ENCODE measurements at regions of chr11 and their contacts with region 1.

Region 1: GRCh38 chr11:35066783-35067423 is 72.1 kb upstream of the CD44 start:
- DNase-seq: no peak
- ATAC-seq: no peak

Region 2: GRCh38 chr11:34840736-34841386 is 226.0 kb before region 1 on chr11:
- intact Hi-C with region 1: no loop called
- DNase-seq: no peak
- ATAC-seq: no peak

Region 3: GRCh38 chr11:35006389-35007128 is 60.3 kb before region 1 on chr11:
- intact Hi-C with region 1: loop called (anchors 10 kb)
- DNase-seq: no peak
- ATAC-seq: no peak

Region 4: DNA sequence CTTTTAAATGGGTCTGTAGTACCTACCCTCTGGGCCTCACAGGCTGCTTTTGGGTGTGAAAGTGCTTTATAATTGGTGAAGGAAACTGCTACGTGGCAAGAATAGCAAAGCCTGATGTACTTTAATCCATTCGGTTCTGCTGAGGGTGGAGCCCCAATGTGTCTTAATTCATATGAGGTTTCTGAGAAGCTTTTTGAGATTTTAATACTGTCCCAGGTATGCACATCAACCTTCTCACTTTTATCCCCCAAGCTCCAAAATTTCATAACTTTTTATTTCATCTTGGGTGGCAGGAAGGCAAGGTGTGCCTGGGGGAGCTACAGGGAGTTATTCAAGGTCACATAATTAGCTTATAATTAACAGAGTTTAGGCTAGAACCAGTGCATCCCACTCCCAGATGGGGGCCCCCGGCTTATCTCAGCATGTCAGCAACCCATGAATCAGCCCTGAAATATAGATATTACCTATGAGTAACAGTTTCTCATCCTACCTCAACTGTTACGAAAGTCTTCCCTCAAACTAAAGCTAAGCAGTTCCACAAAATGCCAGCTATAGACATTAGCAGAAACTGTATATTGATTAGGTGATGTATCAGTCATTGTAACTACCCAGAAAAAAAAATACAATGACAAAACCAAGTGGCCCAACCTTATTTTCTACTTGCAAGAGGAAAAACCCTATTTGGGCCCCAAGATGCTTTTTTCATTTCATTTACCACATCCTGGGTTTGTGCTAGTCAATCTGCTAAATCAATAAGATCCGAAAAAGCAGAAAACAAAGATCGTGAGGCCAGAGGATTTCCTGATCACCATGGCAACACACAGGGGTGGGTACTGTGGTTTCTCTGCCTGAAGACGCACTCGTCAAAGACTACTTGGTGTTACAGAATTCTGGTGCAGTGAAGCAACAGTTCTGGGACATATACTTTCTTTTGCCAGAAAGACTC is 98.8 kb after region 1 on chr11:
- intact Hi-C with region 1: no loop called
- DNase-seq: no peak
- ATAC-seq: no peak

Region 5: DNA sequence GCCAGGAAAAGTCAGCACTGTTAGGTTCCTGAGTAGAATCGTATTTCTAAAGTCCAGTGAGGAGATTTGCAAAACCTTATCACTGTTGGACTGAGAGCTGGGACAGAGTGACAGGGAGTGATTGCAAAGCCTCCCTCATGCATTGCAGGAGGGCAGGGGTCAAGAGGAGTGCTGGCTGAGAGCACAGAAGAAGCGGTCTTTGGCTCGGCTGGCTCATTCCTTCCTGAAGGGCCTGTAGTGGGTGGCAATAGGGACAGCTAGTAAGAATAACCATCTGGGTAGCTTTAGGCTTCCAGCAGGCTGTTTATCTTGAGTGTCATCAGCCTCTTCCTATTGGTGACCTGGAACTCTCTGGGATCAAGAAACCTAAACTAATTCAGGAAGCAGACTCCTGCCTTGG is 125.4 kb after region 1 on chr11:
- intact Hi-C with region 1: no loop called
- DNase-seq: no peak
- ATAC-seq: peak; percentile 94

Measured in Right ventricle myocardium inferior (tissue), 1 donor.